MCF 10A (cell line): ENCODE measurements at regions of chr2 and their contacts with region 1.

Region 1: GRCh38 chr2:105526000-105526925 is 127.4 kb upstream of the FHL2 start:
- DNase-seq: no peak
- H3K4me3 Mint-ChIP-seq: no peak overlapping the region
- H3K27ac Mint-ChIP-seq: no peak overlapping the region
- H3K4me1 Mint-ChIP-seq: no peaks in the 10 kb centered on the region
- H3K27me3 Mint-ChIP-seq: no peaks in the 10 kb centered on the region
- CTCF ChIP-seq: no peak

Region 2: GRCh38 chr2:105183555-105184323 is 342.5 kb before region 1 on chr2:
- CTCF ChIA-PET with region 1: no interaction called
- POLR2A ChIA-PET with region 1: no interaction called
- intact Hi-C with region 1: no loop called
- DNase-seq: no peak
- H3K4me3 Mint-ChIP-seq: no peak overlapping the region
- H3K27ac Mint-ChIP-seq: no peak overlapping the region
- H3K4me1 Mint-ChIP-seq: peaks cover 4% of the 10 kb centered on the region
- H3K27me3 Mint-ChIP-seq: peaks cover 10% of the 10 kb centered on the region
- CTCF ChIP-seq: no peak

Region 3: DNA sequence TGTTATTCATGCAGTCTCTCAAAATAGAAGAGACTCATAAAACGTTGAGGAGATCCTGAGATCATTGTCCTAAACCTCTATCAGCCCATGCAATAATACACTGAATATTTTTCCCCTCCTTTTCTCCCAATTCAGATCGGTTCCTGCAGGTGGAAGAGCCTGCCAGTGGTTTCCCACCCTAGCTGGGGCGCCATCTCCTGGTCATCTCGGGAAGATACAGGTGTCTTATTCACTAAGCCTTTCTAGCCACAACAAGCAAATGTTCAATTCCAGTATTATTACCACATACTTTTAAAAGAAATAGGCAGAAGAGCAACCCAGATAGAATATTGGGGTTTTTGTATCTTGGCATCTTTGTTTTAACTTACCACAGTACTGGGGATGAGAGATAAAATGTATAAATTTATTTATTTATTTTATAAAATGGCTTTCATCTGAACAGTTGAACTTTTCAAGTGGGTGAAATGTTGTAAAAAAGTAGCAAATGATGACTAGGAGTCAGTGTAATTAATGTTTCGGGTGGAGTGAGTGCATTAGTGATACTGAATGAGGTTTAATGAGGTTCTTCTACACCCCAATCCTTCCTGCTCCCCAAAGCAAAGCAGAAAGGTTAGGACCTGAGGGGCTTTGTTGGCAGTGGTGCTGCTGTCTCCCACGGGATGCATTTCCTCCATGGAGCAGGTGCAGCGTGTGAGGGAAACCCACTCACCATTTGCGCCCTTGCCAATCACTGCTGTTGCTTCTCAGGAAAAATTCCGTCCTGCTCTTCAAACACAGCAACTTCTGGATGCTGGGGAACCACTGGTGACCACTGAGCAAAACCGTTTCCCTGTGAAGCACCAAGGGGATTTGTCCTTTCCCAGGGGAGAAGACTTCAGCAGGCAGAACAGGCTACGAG is 19.7 kb after region 1 on chr2:
- CTCF ChIA-PET with region 1: interaction called, 14 read pairs
- POLR2A ChIA-PET with region 1: no interaction called
- intact Hi-C with region 1: no loop called
- DNase-seq: peak; percentile 86
- H3K4me3 Mint-ChIP-seq: no peak overlapping the region
- H3K27ac Mint-ChIP-seq: no peak overlapping the region
- H3K4me1 Mint-ChIP-seq: no peaks in the 10 kb centered on the region
- H3K27me3 Mint-ChIP-seq: peaks cover 68% of the 10 kb centered on the region
- CTCF ChIP-seq: peak; percentile 72